IMR-90 (cell line): ENCODE measurements at regions of chr2 and their contacts with region 1.

Region 1: GRCh38 chr2:128321784-128322714 is 3.4 kb upstream of the HS6ST1 start:
- DNase-seq: peak; percentile 75
- ATAC-seq: peak; percentile 64
- H3K4me3 ChIP-seq: peak overlapping the region; percentile 49
- H3K27ac ChIP-seq: peak overlapping the region; percentile 58
- H3K4me1 ChIP-seq: peaks cover 7% of the 10 kb centered on the region; the same call in 1 of the 2 replicates
- H3K27me3 ChIP-seq: no peaks in the 10 kb centered on the region
- CTCF ChIP-seq: peak; percentile 99
- POLR2A ChIP-seq: peak; percentile 63
- RAD21 ChIP-seq: peak; percentile 95

Region 2: GRCh38 chr2:128408349-128409305 is 86.6 kb after region 1 on chr2:
- CTCF ChIA-PET with region 1: no interaction called
- POLR2A ChIA-PET with region 1: no interaction called
- dilution Hi-C with region 1: no loop called
- in situ Hi-C with region 1: no loop called
- intact Hi-C with region 1: no loop called
- DNase-seq: peak; percentile 86
- ATAC-seq: peak; percentile 87
- H3K4me3 ChIP-seq: no peak overlapping the region
- H3K27ac ChIP-seq: peak overlapping the region; percentile 53; the same call in 1 of the 2 replicates
- H3K4me1 ChIP-seq: peaks cover 10% of the 10 kb centered on the region
- H3K27me3 ChIP-seq: no peaks in the 10 kb centered on the region
- CTCF ChIP-seq: no peak
- POLR2A ChIP-seq: no peak
- RAD21 ChIP-seq: no peak

Region 3: DNA sequence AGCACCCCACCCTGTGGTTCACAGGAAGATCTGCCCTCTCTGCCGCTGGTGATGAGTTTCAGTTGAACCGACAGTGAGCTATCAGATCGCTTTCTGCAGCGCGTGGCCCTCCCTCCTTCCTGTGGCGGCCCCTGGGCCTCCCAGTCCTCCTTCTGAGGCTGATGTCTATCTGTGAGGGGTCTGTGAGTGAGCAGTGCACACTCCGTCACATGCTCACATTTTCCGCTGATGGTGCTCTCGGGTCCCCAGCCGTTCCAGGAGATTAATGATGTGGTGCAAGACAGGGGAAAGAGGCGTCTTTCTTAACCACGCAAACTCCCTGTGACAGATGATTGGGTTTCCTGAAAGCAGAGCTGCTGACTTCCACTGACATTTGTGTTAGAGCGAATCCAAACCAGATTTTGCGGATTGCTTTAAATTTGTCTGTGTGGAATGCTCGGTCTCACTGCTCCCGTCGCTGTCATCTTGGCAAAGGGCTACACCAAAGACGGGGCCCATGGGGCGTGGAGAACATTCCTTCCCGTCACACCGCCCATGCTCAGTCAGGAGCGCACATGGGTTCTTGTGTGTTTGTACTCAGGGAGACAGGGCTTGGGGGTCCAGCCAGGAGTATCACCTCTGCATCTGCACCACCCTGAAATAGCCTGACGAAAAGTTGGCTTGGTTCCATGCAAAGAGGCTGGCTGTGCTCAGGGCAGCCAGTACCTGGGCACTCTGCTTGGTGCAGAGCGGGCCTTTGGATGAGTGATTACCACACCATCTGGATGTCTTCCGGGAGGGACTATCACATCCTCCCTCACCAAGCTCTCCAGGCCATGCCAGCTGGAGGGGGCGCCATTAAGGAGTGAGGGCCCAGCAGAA is 151.4 kb after region 1 on chr2:
- CTCF ChIA-PET with region 1: no interaction called
- POLR2A ChIA-PET with region 1: no interaction called
- dilution Hi-C with region 1: no loop called
- in situ Hi-C with region 1: no loop called
- intact Hi-C with region 1: loop called (anchors 5 kb)
- DNase-seq: peak; percentile 62
- ATAC-seq: peak; percentile 76
- H3K4me3 ChIP-seq: no peak overlapping the region; the same call in 1 of the 2 replicates
- H3K27ac ChIP-seq: peak overlapping the region; percentile 38; the same call in 1 of the 2 replicates
- H3K4me1 ChIP-seq: peaks cover 6% of the 10 kb centered on the region; the same call in 1 of the 2 replicates
- H3K27me3 ChIP-seq: peaks cover 4% of the 10 kb centered on the region
- CTCF ChIP-seq: no peak
- POLR2A ChIP-seq: no peak
- RAD21 ChIP-seq: no peak

Region 4: GRCh38 chr2:128623776-128624424 is 301.9 kb after region 1 on chr2:
- CTCF ChIA-PET with region 1: interaction called, 3 read pairs
- POLR2A ChIA-PET with region 1: no interaction called
- dilution Hi-C with region 1: no loop called
- in situ Hi-C with region 1: loop called (anchors 10 kb)
- intact Hi-C with region 1: loop called (anchors 5 kb)
- DNase-seq: peak; percentile 95
- ATAC-seq: peak; percentile 80
- H3K4me3 ChIP-seq: no peak overlapping the region
- H3K27ac ChIP-seq: peak overlapping the region; percentile 91
- H3K4me1 ChIP-seq: peaks cover 34% of the 10 kb centered on the region
- H3K27me3 ChIP-seq: peaks cover 3% of the 10 kb centered on the region; the same call in 1 of the 2 replicates
- CTCF ChIP-seq: no peak
- POLR2A ChIP-seq: no peak
- RAD21 ChIP-seq: no peak

Region 5: DNA sequence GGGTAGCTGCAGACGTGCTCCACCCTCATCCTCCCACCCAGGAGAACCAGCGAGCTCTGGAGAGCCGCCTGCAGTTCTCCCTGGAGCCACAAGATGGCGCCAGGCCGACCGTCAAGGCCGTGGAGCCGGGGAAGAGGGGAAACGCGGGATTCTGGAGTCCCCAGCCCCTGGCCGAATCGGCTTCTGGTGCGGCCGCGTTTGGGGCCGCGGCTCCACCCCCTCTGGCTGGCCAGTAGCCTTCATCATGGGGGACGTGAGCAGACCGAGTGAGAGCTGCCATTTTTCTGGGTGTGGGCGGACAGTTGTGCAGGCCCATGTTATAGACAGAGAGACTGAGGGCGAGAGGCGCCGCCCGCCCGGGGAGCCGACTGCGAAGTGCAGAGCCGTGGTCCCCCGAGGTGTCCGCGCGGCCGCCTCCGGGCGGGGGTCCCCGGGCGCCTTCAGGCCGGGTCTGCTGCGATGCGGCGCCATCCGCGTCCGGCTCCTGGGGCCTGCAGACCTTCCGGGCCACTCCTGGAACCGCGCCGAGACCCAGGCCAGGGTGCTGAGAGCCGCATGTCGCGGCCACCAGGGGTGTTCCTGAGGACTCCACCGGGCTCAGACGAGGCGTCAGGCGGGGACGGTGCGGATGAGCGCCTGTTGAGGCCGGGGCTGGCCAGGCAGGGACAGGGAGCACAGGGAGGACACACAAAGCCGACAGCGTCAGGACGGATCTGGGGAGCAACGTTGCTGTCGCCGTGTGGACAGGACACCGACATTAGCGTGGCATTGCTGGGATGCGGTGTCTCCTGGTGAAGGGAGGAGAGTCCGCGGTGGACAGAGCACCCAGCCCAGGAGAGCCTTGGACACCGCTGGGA is 414.9 kb after region 1 on chr2:
- CTCF ChIA-PET with region 1: no interaction called
- POLR2A ChIA-PET with region 1: no interaction called
- dilution Hi-C with region 1: no loop called
- in situ Hi-C with region 1: no loop called
- intact Hi-C with region 1: loop called (anchors 5 kb)
- DNase-seq: peak; percentile 49
- ATAC-seq: peak; percentile 84
- H3K4me3 ChIP-seq: no peak overlapping the region; the same call in 1 of the 2 replicates
- H3K27ac ChIP-seq: no peak overlapping the region
- H3K4me1 ChIP-seq: peaks cover 11% of the 10 kb centered on the region; the same call in 1 of the 2 replicates
- H3K27me3 ChIP-seq: peaks cover 10% of the 10 kb centered on the region; the same call in 1 of the 2 replicates
- CTCF ChIP-seq: peak; percentile 87
- POLR2A ChIP-seq: no peak
- RAD21 ChIP-seq: peak; percentile 64

Region 6: GRCh38 chr2:129849559-129850160 is 1527.6 kb after region 1 on chr2:
- CTCF ChIA-PET with region 1: no interaction called
- POLR2A ChIA-PET with region 1: no interaction called
- dilution Hi-C with region 1: no loop called
- in situ Hi-C with region 1: no loop called
- intact Hi-C with region 1: loop called (anchors 2 kb)
- DNase-seq: peak; percentile 78
- ATAC-seq: peak; percentile 94
- H3K4me3 ChIP-seq: no peak overlapping the region
- H3K27ac ChIP-seq: no peak overlapping the region
- H3K4me1 ChIP-seq: no peaks in the 10 kb centered on the region
- H3K27me3 ChIP-seq: no peaks in the 10 kb centered on the region
- CTCF ChIP-seq: peak; percentile 76
- POLR2A ChIP-seq: no peak
- RAD21 ChIP-seq: peak; percentile 69